ENCODE measurements at regions of chr1 and their contacts with region 1.

Region 1: DNA sequence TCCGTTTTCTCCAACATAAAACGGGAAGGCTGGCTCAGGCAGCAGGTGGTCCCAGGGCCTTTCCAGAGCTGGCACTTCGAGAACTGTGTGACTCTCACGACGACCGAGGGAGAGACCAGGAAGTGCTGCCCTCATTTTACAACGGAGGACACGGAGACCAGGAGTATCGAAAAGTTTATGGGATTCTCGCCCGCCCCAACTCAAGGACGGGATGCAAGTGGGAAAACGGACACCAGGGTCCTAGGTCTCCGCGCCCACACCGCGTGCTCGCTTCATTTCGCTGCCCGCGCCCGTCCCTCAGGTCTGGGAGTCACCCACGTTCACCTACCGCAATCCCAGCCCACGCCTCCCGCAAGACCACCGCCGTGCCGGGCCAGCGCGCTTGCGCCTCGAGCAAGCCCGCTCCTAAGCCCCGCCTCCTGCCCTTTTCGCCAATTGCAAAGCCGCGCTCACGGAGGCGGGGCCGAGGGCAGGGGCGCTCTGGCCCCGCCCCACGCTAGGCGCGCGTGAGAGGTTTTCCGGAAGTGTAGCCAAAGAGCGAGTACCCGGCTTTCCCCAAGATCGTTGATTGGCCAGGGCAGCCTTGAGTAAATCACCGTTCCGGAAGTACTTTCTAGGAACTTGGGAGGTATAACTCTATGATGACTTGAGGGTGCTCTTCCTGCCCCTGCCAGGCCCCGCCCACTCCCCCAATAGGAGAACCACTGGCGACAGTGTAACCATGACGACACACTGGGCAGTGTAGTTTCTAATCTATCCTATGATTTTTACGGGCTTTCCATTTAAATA is at the start of gene PARS2:
- DNase-seq: peak; percentile 87 to 97 (median 96)
- H3K4me3 ChIP-seq: peak within 1 kb of the TSS; percentile 68 to 99 (median 89)
- H3K27ac ChIP-seq: peak within 1 kb of the TSS in 48 of 59 donors; percentile 21 to 87 (median 60)
- H3K27me3 ChIP-seq: no peaks in the 10 kb centered on the region
- CTCF ChIP-seq: peak in 25 of 56 donors; percentile 9 to 57 (median 27)
- total RNA-seq, gene PARS2: 2.5 to 7.0 (median 4.9) TPM

Region 2: GRCh38 chr1:53837924-53838652 is 926.2 kb before region 1 on chr1 and contains the start of gene NDC1:
- intact Hi-C with region 1: loop called in 1 of 2 experiments (anchors 10 kb)
- DNase-seq: peak; percentile 79 to 95 (median 91)
- H3K4me3 ChIP-seq: peak within 1 kb of the TSS; percentile 67 to 97 (median 84)
- H3K27ac ChIP-seq: peak within 1 kb of the TSS; percentile 86 to 100 (median 99)
- H3K27me3 ChIP-seq: no peaks in the 10 kb centered on the region
- CTCF ChIP-seq: peak in 52 of 56 donors; percentile 22 to 73 (median 52)
- total RNA-seq, gene NDC1: 5.4 to 15.8 (median 10.1) TPM

Region 3: GRCh38 chr1:54052934-54053744 is 711.2 kb before region 1 on chr1 and contains the starts of genes TCEANC2 and TMEM59:
- intact Hi-C with region 1: loop called in 1 of 2 experiments (anchors 5 kb)
- DNase-seq: peak; percentile 94 to 99 (median 98)
- H3K4me3 ChIP-seq: peak within 1 kb of the TSS; percentile 71 to 100 (median 95)
- H3K27ac ChIP-seq: peak within 1 kb of the TSS; percentile 82 to 99 (median 96)
- H3K27me3 ChIP-seq: no peaks in the 10 kb centered on the region
- CTCF ChIP-seq: peak in 30 of 56 donors; percentile 4 to 57 (median 29)
- total RNA-seq, gene TCEANC2: 5.2 to 16.1 (median 8.6) TPM
- total RNA-seq, gene TMEM59: 155 to 435 (median 269) TPM

Region 4: GRCh38 chr1:54547601-54548388 is 216.5 kb before region 1 on chr1 and contains the start of gene ACOT11:
- intact Hi-C with region 1: loop called in 1 of 2 experiments (anchors 5 kb)
- DNase-seq: peak; percentile 47 to 86 (median 82)
- H3K4me3 ChIP-seq: peak within 1 kb of the TSS in 58 of 59 donors; percentile 8 to 66 (median 48)
- H3K27ac ChIP-seq: peak within 1 kb of the TSS in 58 of 59 donors; percentile 24 to 94 (median 76)
- H3K27me3 ChIP-seq: no peaks in the 10 kb centered on the region
- CTCF ChIP-seq: peak in 55 of 56 donors; percentile 29 to 82 (median 59)
- total RNA-seq, gene ACOT11: 13.3 to 66.0 (median 31.4) TPM

Region 5: GRCh38 chr1:54715493-54716298 is 48.6 kb before region 1 on chr1 and contains the start of gene TTC4:
- intact Hi-C with region 1: loop called (anchors 1 to 5 kb)
- DNase-seq: peak; percentile 71 to 92 (median 82)
- H3K4me3 ChIP-seq: peak within 1 kb of the TSS; percentile 44 to 100 (median 90)
- H3K27ac ChIP-seq: peak within 1 kb of the TSS in 54 of 59 donors; percentile 20 to 89 (median 76)
- H3K27me3 ChIP-seq: no peaks in the 10 kb centered on the region
- CTCF ChIP-seq: peak in 39 of 56 donors; percentile 10 to 58 (median 30)
- total RNA-seq, gene TTC4: 17.2 to 30.3 (median 23.6) TPM

Region 6: GRCh38 chr1:54728027-54728426 is 36.3 kb before region 1 on chr1:
- intact Hi-C with region 1: no loop called
- DNase-seq: no peak
- H3K4me3 ChIP-seq: no peak overlapping the region
- H3K27ac ChIP-seq: no peak overlapping the region
- H3K27me3 ChIP-seq: no peaks in the 10 kb centered on the region
- CTCF ChIP-seq: no peak

Region 7: DNA sequence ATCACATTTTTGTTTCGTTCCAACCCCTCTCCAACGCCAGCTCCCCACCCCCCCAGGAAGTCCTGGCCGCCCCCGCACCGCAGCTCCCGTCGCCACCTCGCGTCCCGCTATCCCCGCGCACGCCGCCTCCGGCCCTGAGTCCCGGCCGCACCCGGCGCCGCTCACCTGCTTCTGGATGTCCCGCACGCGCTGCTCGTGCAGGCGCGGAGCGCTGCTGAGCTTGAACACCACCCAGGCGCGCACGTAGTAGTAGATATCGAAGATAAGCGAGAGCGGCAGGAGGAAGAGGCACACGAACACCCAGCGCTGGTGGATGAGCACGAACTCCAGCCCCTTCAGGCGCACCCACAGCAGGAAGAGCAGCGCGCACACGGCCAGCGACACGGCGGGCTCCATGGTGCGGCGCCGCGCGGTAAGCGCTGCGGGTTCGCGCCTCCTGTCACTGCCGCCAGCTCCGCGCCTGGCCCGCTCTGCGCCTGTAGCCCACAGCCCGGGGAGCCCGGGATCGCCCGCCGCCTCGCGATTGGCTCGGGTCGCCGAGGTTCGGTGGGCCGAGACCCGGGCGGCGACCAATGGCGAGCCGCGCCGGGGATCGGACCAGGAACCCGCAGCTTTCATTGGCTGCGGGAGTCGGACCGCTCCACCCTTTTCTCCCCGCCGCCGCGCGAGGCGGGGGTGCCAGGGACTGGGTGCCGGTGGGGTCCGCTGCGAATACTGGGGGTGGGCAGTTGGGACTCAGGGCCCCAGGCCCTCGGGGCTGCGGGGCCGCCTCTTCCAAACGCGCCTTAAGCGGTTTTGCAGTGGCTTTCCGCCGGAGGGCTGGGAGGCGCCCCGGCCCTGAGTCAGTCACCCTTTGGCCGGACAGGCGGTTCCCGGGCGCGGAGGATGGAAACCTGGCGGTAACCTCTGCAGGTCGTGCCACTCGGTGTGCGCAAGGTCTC is 122.7 kb after region 1 on chr1 and contains the start of gene DHCR24:
- intact Hi-C with region 1: loop called in 1 of 2 experiments (anchors 5 kb)
- DNase-seq: peak; percentile 90 to 98 (median 95)
- H3K4me3 ChIP-seq: peak within 1 kb of the TSS; percentile 64 to 98 (median 91)
- H3K27ac ChIP-seq: peak within 1 kb of the TSS; percentile 20 to 97 (median 91)
- H3K27me3 ChIP-seq: no peaks in the 10 kb centered on the region
- CTCF ChIP-seq: peak in 12 of 56 donors; percentile 6 to 38 (median 22)
- total RNA-seq, gene DHCR24: 81.5 to 336 (median 168) TPM